WTC11 (cell line): ENCODE measurements at regions of chr6 and their contacts with region 1.

Region 1: DNA sequence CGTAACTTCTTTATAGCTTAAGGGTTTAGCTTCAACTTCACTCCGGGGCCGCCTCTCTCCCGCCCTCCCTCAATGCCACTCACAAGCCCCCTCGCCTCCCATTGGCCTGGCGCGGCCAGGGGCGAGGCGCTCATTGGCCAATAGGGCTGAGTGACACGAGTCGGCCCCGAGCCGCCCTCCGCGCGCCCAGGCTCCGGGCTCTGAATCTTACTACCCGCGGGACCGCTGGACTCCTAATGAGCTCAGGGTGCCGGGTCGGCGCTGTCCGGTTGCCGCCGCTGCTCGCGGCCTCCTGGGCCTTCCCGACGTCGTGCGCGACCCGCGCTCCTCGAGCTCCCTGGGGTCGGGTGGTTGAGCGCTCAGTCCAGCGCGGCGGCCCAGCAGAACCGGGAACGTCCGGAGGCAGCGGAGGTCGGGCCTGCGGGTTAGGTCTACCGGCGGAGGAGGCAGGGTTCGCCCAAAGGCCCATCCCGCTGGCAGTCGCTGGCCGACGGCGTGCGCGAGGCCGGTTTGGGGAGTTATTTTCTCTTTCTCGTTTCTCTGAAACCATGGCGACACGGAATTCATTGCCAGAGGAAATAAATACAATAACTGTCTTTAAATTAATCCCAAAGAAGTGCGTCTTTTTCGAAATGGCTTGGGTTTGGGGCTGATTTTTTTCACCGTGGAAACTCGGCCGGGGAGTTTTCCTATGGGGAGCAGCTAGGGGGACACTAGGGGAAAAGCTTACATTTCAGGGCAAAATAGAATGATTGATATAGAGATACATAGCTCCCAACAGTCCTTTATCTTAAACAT is at the start of gene SIM1:
- DNase-seq: peak; percentile 93
- ATAC-seq: peak; percentile 89
- H3K4me3 Mint-ChIP-seq: peak within 1 kb of the TSS; percentile 71
- H3K27ac Mint-ChIP-seq: no peak within 1 kb of the TSS
- H3K4me1 Mint-ChIP-seq: peaks cover 68% of the 10 kb centered on the region
- H3K27me3 Mint-ChIP-seq: no peaks in the 10 kb centered on the region; the same call in 1 of the 2 replicates
- CTCF ChIP-seq: no peak
- total RNA-seq, gene SIM1: 0.09 to 0.11 TPM (median 0.11 TPM) in 3 replicates

Region 2: GRCh38 chr6:100116411-100117194 is 348.5 kb before region 1 on chr6:
- CTCF ChIA-PET with region 1: interaction called, 18 read pairs
- POLR2A ChIA-PET with region 1: no interaction called
- DNase-seq: peak; percentile 43
- ATAC-seq: peak; percentile 93
- H3K4me3 Mint-ChIP-seq: no peak overlapping the region
- H3K27ac Mint-ChIP-seq: no peak overlapping the region
- H3K4me1 Mint-ChIP-seq: peaks cover 8% of the 10 kb centered on the region
- H3K27me3 Mint-ChIP-seq: no peaks in the 10 kb centered on the region
- CTCF ChIP-seq: peak; percentile 58

Region 3: DNA sequence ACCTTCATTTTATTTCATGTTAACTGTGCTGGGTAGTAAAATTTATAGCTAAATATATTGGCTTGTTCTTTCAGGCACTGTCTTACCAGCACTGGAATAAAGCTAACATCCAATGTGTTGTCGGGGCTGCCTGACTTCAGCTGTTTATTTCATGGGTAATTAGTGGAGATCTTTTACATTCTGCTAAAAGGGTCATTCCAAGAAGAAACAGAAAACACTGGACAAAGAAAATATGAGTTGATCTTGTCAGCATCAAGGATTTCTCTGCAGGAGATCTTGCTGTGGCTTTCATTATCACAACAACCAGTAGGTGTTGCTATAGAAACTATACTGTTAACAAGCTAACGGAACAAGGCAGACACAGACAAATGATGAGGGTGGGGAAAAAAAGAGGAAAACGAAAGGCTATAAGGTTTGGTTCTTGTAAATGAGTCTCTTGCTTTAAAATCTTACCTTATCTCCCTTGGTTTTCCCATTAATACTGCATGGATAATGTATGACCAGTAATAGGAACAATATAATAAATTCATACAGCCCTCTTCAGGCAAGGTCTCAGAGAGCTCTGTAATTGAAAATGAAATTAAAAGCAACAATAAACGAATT is 207.2 kb before region 1 on chr6:
- CTCF ChIA-PET with region 1: interaction called, 10 read pairs
- POLR2A ChIA-PET with region 1: no interaction called
- DNase-seq: no peak
- ATAC-seq: peak; percentile 66
- H3K4me3 Mint-ChIP-seq: no peak overlapping the region
- H3K27ac Mint-ChIP-seq: no peak overlapping the region
- H3K4me1 Mint-ChIP-seq: peaks cover 9% of the 10 kb centered on the region
- H3K27me3 Mint-ChIP-seq: no peaks in the 10 kb centered on the region
- CTCF ChIP-seq: no peak

Region 4: GRCh38 chr6:100317031-100317430 is 148.1 kb before region 1 on chr6:
- CTCF ChIA-PET with region 1: no interaction called
- POLR2A ChIA-PET with region 1: no interaction called
- DNase-seq: no peak
- ATAC-seq: no peak
- H3K4me3 Mint-ChIP-seq: no peak overlapping the region
- H3K27ac Mint-ChIP-seq: no peak overlapping the region
- H3K4me1 Mint-ChIP-seq: no peaks in the 10 kb centered on the region
- H3K27me3 Mint-ChIP-seq: no peaks in the 10 kb centered on the region
- CTCF ChIP-seq: no peak

Region 5: DNA sequence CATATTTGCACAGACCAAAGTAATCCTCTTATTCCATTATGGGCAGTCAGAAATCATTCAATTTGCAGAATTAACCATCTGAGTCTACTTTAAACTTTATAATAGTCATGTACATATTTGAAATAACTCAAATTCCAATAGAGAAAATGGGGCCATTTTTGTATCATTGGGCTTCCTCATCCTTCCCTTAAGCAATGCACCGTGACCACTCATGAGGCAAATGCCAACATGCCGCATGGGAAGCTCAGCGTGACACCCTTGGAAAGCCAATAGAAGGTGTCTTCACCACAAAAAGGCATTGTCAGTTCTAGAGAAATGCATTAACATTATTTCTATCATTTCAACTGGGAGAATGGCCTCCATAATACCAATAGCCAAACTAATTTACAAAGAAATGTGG is 38.9 kb before region 1 on chr6:
- CTCF ChIA-PET with region 1: interaction called, 12 read pairs
- POLR2A ChIA-PET with region 1: no interaction called
- DNase-seq: no peak
- ATAC-seq: no peak
- H3K4me3 Mint-ChIP-seq: no peak overlapping the region
- H3K27ac Mint-ChIP-seq: no peak overlapping the region
- H3K4me1 Mint-ChIP-seq: peaks cover 26% of the 10 kb centered on the region
- H3K27me3 Mint-ChIP-seq: no peaks in the 10 kb centered on the region
- CTCF ChIP-seq: no peak